ENCODE measurements at regions of chr6 and their contacts with region 1.

Region 1: GRCh38 chr6:155050311-155050710 is 55.2 kb downstream of the TIAM2 start:
- DNase-seq: peak; percentile 22
- H3K4me3 Mint-ChIP-seq: peak overlapping the region; percentile 66
- H3K27ac Mint-ChIP-seq: peak overlapping the region; percentile 96
- H3K4me1 Mint-ChIP-seq: peaks cover 30% of the 10 kb centered on the region
- H3K27me3 Mint-ChIP-seq: no peaks in the 10 kb centered on the region

Region 2: GRCh38 chr6:154995284-154996015 is 54.9 kb before region 1 on chr6 and contains the start of gene TIAM2:
- intact Hi-C with region 1: loop called (anchors 5 kb)
- DNase-seq: peak; percentile 18
- H3K4me3 Mint-ChIP-seq: peak within 1 kb of the TSS; percentile 71
- H3K27ac Mint-ChIP-seq: no peak within 1 kb of the TSS
- H3K4me1 Mint-ChIP-seq: peaks cover 16% of the 10 kb centered on the region
- H3K27me3 Mint-ChIP-seq: peaks cover 2% of the 10 kb centered on the region
- total RNA-seq, gene TIAM2: 41.4 and 46.0 TPM in 2 replicates

Region 3: DNA sequence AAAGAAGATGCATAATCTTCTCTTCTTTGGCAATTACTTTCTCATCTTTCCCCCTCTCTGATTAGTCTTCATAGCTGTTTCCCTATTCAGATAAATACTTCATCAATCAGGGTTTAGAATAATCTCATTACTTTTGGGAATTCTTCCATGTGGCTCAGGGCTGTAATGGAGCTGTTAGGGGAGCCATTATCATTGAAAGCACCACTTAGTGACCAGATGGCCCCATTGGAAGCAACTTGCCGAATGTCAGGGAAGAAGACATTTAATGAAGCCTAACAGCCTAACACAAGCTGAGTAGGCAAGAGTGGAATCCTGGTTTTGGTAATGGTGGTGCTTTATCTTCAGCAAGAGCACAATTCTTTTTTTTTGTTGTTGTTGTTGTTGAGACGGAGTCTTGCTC is 10.2 kb before region 1 on chr6:
- intact Hi-C with region 1: no loop called
- DNase-seq: no peak
- H3K4me3 Mint-ChIP-seq: no peak overlapping the region
- H3K27ac Mint-ChIP-seq: no peak overlapping the region
- H3K4me1 Mint-ChIP-seq: peaks cover 8% of the 10 kb centered on the region
- H3K27me3 Mint-ChIP-seq: no peaks in the 10 kb centered on the region

Region 4: DNA sequence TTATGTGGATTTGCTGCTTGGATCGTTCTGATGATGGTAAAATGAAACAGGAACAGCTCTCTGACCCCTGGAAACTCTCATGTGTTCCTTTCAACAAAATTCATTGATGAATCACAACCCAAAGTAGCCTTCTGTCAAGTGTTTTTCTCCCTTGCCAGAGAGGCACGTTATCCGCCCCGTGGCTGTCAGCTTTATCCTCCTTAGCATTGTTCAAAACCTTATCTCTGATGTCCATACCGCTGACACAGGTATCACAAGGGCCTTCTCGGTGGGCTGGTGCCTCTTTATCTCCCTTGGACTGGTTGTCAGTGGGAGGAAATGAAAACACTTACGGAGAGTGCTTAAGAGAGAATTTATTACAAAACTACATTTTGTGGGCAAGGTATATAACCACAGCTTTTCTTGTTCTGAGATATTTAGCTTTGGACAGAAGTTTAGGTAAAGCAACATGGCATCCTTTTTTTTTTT is 29.7 kb after region 1 on chr6:
- intact Hi-C with region 1: loop called (anchors 1 kb)
- DNase-seq: no peak
- H3K4me3 Mint-ChIP-seq: no peak overlapping the region
- H3K27ac Mint-ChIP-seq: peak overlapping the region; percentile 85
- H3K4me1 Mint-ChIP-seq: peaks cover 55% of the 10 kb centered on the region
- H3K27me3 Mint-ChIP-seq: no peaks in the 10 kb centered on the region

Region 5: GRCh38 chr6:155100087-155100486 is 49.8 kb after region 1 on chr6:
- intact Hi-C with region 1: loop called (anchors 5 kb)
- DNase-seq: no peak
- H3K4me3 Mint-ChIP-seq: no peak overlapping the region
- H3K27ac Mint-ChIP-seq: no peak overlapping the region
- H3K4me1 Mint-ChIP-seq: peaks cover 34% of the 10 kb centered on the region
- H3K27me3 Mint-ChIP-seq: no peaks in the 10 kb centered on the region

Measured in activated T-helper 2 cell treated with anti-CD3 and anti-CD28 coated beads, Interferon-gamma antibody, Interleukin-2, Interleukin-4, amounts not matched to agents 10 μg/mL and 5 μg/mL and 100 μg/mL, durations not matched to agents 14 hours and 24 hours and 36 hours (primary cell).